Activated CD8-positive, alpha-beta T cell treated with anti-CD3 and anti-CD28 coated beads, Interleukin-2, amount 10 ng/mL, durations not matched to agents 7 days and 5 days (primary cell): ENCODE measurements at regions of chr17 and their contacts with region 1.

Region 1: DNA sequence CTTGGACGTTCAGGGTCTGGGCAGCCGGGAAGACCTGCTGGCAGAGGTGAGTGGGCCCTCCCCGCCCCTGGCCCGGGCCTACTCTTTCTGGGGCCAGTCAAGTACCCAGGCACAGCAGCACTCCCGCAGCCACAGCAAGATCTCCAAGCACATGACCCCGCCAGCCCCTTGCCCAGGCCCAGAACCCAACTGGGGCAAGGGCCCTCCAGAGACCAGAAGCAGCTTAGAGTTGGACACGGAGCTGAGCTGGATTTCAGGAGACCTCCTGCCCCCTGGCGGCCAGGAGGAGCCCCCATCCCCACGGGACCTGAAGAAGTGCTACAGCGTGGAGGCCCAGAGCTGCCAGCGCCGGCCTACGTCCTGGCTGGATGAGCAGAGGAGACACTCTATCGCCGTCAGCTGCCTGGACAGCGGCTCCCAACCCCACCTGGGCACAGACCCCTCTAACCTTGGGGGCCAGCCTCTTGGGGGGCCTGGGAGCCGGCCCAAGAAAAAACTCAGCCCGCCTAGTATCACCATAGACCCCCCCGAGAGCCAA is 8.6 kb upstream of the ABCC3 start:
- DNase-seq: peak; percentile 72
- ATAC-seq: peak; percentile 75
- H3K4me3 Mint-ChIP-seq: no peak overlapping the region
- H3K27ac Mint-ChIP-seq: no peak overlapping the region
- H3K4me1 Mint-ChIP-seq: peaks cover 10% of the 10 kb centered on the region
- H3K27me3 Mint-ChIP-seq: peaks cover 29% of the 10 kb centered on the region

Region 2: DNA sequence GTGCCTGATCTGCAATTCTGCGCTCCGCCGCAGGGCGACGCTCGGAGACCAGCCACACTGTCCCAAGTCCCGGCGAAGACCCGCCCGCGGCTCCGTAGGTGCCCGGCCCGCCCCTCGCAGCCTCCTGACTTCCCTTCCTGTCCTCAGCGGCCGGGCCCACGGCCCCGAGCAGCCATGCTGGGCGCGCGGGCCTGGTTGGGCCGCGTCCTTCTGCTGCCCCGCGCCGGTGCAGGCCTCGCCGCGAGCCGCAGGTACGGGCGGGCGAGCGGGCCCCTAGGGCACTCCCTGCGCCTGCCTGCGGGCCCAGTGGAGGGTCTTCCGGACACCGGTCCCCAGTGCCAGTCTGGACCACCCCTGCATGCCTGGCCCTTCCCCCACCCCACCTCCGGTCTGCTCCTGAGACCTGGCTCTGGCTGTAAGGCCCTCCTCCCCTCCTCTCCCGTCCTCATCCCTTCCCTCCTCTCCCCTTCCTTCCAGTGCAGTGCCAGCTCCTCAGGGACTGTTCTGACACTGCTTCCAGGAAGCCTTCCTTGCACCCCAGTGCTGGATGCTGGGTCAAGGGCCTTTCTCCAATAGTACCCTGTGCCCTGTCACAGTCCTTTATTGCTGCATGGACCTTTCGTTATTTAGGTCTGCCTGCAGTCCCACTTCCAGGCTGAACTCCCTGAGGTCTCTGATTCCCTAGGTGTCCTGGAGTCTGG is 78.9 kb before region 1 on chr17 and contains the start of gene SPATA20:
- CTCF ChIA-PET with region 1: interaction called, 28 read pairs
- POLR2A ChIA-PET with region 1: no interaction called
- DNase-seq: peak; percentile 93
- ATAC-seq: peak; percentile 93
- H3K4me3 Mint-ChIP-seq: peak within 1 kb of the TSS; percentile 77
- H3K27ac Mint-ChIP-seq: peak within 1 kb of the TSS; percentile 88
- H3K4me1 Mint-ChIP-seq: peaks cover 22% of the 10 kb centered on the region
- H3K27me3 Mint-ChIP-seq: peaks cover 13% of the 10 kb centered on the region
- total RNA-seq, gene SPATA20: 23.9 to 27.3 TPM

Region 3: GRCh38 chr17:50638851-50639767 is 13.0 kb after region 1 on chr17:
- CTCF ChIA-PET with region 1: interaction called, 23 read pairs
- POLR2A ChIA-PET with region 1: no interaction called
- DNase-seq: no peak
- ATAC-seq: no peak
- H3K4me3 Mint-ChIP-seq: no peak overlapping the region
- H3K27ac Mint-ChIP-seq: no peak overlapping the region
- H3K4me1 Mint-ChIP-seq: no peaks in the 10 kb centered on the region
- H3K27me3 Mint-ChIP-seq: peaks cover 33% of the 10 kb centered on the region

Region 4: DNA sequence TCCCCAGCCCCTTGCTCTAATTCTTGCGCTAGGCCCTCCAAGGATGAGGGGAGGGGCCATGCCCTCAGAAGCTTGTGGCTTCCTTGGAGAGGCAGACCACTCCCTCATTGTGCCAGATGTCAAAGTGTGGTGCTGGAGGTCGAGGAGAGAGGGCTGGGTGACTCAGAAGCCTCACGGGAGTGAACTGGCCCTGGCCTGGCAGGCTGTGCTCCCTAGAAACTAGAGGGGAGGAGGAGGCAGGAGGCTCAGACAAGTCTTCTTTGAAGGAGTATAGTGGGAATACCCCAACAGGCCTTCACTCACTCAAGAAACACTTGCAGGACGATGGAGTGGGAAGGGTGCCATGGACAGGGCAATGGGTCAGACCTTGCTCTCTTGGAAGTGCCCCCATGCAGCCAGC is 63.1 kb after region 1 on chr17:
- CTCF ChIA-PET with region 1: interaction called, 21 read pairs
- POLR2A ChIA-PET with region 1: no interaction called
- DNase-seq: no peak
- ATAC-seq: no peak
- H3K4me3 Mint-ChIP-seq: no peak overlapping the region
- H3K27ac Mint-ChIP-seq: no peak overlapping the region
- H3K4me1 Mint-ChIP-seq: no peaks in the 10 kb centered on the region
- H3K27me3 Mint-ChIP-seq: no peaks in the 10 kb centered on the region

Region 5: DNA sequence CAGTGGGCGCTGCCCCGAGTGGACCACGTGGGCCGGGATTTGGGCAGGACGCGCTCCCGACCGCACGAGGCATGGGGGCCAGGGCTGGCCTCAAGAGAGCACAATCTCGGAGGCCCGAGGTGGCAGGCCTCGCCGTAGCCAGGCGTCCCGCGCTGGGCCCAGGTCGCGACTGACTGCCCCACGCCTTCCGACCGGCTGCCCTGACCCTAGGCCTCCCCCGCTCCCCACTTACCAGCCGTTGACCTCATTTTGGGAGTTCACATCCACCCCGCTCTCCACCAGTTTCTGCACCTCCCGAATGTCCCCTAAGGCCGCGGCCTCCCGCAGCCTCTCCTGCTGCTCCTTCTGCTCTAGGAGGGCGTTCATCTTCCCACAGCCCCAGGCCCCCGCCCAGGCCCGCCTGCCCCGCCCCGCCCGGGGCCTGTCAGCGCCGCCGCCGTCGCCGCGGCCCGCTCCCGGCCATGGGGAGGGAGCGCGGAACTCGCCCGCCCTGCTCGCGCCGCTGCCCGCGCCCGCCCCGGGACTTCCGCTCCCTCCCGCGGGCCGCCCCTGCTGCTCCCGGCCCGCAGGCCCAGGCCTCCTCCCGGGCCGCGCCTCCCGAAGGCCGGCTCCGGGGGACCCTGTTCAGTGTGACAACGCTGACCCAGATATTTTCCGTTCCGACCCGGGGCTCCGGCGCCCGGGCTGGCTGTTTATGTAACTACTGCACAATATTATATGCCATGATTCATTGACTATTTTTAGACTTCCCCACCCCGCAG is 81.4 kb after region 1 on chr17 and contains the start of gene ANKRD40:
- CTCF ChIA-PET with region 1: interaction called, 12 read pairs
- POLR2A ChIA-PET with region 1: no interaction called
- DNase-seq: peak; percentile 92
- ATAC-seq: peak; percentile 88
- H3K4me3 Mint-ChIP-seq: peak within 1 kb of the TSS; percentile 95
- H3K27ac Mint-ChIP-seq: peak within 1 kb of the TSS; percentile 96
- H3K4me1 Mint-ChIP-seq: peaks cover 53% of the 10 kb centered on the region
- H3K27me3 Mint-ChIP-seq: peaks cover 2% of the 10 kb centered on the region
- total RNA-seq, gene ANKRD40: 28.9 to 31.2 TPM